Activated CD4-positive, alpha-beta memory T cell treated with anti-CD3 and anti-CD28 coated beads for 36 hours (primary cell): ENCODE measurements at regions of chr13 and their contacts with region 1.

Region 1: DNA sequence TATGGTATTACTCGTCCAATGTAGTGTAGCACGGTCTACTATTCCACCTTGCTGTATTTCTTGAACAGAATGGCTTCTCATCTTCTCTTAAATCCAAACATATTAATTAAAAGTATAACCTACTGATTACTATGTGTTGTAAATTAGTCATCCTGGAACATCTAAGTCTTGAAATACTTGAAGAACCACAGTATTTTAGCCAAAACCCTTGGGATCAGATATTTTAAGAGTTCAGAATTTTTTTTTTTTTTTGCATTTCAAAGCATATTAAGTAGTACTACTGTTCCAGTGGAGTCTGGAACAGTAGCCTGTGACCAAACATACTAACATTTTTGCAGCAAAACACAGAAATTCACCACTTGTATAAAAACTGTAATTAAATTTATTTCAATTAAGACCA is 30.1 kb downstream of the ZC3H13 start:
- DNase-seq: no peak
- H3K4me3 Mint-ChIP-seq: no peak overlapping the region
- H3K27ac Mint-ChIP-seq: no peak overlapping the region
- H3K4me1 Mint-ChIP-seq: peaks cover 6% of the 10 kb centered on the region
- H3K27me3 Mint-ChIP-seq: no peaks in the 10 kb centered on the region

Region 2: DNA sequence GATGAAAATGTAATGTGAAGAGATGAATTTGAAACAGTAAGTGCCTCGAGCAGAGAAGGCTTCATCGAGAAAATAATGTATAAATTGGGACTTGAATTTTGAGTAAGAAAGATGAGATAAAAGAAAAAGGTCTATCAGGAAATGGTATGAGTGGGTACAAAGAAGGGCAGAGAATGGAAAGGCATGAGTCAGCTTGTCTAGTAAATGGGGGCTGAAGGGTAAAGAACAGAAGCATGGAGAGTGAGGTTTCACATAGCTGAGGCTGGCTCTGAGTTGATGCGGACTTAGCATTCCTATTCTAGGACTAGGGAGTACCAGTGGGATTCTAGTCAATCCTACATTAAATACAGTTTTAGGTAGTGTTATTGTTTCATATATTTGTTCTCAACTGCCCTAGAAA is 55.8 kb before region 1 on chr13:
- CTCF ChIA-PET with region 1: no interaction called
- POLR2A ChIA-PET with region 1: no interaction called
- intact Hi-C with region 1: loop called (anchors 5 kb)
- DNase-seq: no peak
- H3K4me3 Mint-ChIP-seq: no peak overlapping the region
- H3K27ac Mint-ChIP-seq: peak overlapping the region; percentile 43
- H3K4me1 Mint-ChIP-seq: peaks cover 13% of the 10 kb centered on the region
- H3K27me3 Mint-ChIP-seq: no peaks in the 10 kb centered on the region

Region 3: GRCh38 chr13:46202188-46202795 is 179.8 kb after region 1 on chr13:
- CTCF ChIA-PET with region 1: no interaction called
- POLR2A ChIA-PET with region 1: no interaction called
- intact Hi-C with region 1: no loop called
- DNase-seq: no peak
- H3K4me3 Mint-ChIP-seq: no peak overlapping the region
- H3K27ac Mint-ChIP-seq: peak overlapping the region; percentile 81
- H3K4me1 Mint-ChIP-seq: peaks cover 32% of the 10 kb centered on the region
- H3K27me3 Mint-ChIP-seq: no peaks in the 10 kb centered on the region